ENCODE measurements at regions of chr3 and their contacts with region 1.

Region 1: DNA sequence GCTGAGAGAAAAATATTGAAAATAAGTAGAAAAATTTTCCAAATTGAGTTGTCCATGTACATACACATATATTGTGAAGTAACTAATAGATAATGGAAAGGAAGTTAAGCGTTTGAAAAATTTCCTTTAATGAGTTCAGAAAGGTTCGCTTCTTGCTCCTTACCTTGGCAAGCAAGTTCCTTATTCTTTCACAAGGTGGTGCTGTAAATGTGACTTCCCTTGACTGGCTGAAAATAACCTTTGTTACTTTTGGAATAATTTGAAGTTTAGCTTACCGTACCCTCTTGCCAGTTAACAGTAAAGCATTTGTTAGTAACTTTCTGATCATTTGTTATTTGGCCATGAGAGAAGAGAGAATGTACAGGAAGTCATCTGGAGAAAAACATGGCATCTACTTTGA is 41.6 kb downstream of the PYDC2 start:
- DNase-seq: peak in 1 of 2 experiments; percentile 5
- H3K4me3 ChIP-seq: no peak overlapping the region
- H3K4me3 Mint-ChIP-seq: no peak overlapping the region
- H3K27ac Mint-ChIP-seq: no peak overlapping the region
- H3K4me1 ChIP-seq: no peaks in the 10 kb centered on the region; the same call in 1 of the 2 replicates
- H3K4me1 Mint-ChIP-seq: peaks cover 6% of the 10 kb centered on the region
- H3K27me3 ChIP-seq: no peaks in the 10 kb centered on the region
- H3K27me3 Mint-ChIP-seq: no peaks in the 10 kb centered on the region
- CTCF ChIP-seq: peak; percentile 29 to 40

Region 2: GRCh38 chr3:191528589-191528988 is 26.0 kb after region 1 on chr3:
- CTCF ChIA-PET with region 1: no interaction called
- POLR2A ChIA-PET with region 1: no interaction called
- intact Hi-C with region 1: no loop called
- DNase-seq: no peak
- H3K4me3 ChIP-seq: no peak overlapping the region
- H3K4me3 Mint-ChIP-seq: no peak overlapping the region
- H3K27ac Mint-ChIP-seq: no peak overlapping the region
- H3K4me1 ChIP-seq: no peaks in the 10 kb centered on the region
- H3K4me1 Mint-ChIP-seq: no peaks in the 10 kb centered on the region
- H3K27me3 ChIP-seq: no peaks in the 10 kb centered on the region
- H3K27me3 Mint-ChIP-seq: no peaks in the 10 kb centered on the region
- CTCF ChIP-seq: no peak

Region 3: DNA sequence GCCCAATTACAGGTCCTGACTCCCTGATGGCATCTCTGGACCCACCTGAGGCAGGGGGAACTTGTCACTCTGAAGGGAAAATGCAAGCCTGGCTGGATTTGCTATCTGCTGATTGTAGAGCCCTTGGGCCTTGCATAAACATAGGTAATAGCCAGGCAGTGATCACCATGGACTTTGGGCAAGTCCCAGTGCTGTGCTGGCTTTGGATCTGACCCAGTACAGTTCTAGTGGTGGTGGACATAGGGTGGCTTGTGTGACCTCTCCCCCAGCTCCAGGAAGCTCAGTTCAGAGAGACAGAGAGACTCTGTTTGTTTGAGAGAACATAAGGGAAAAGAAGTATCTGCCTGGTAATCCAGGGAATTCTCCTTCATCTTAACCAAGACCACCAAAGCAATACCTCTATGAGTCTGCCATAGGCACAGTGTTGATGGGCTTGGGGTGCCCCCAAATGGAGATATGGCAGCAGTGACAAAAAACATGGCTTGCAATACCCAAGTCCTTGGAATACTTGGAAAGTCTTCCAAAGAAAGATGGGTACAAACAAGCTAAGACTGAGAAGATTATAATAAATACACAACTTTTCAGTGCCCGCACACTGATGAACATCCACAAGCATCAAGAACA is 306.9 kb after region 1 on chr3:
- CTCF ChIA-PET with region 1: no interaction called
- POLR2A ChIA-PET with region 1: no interaction called
- intact Hi-C with region 1: loop called (anchors 1 kb)
- DNase-seq: peak in 1 of 2 experiments; percentile 29
- H3K4me3 ChIP-seq: no peak overlapping the region
- H3K4me3 Mint-ChIP-seq: no peak overlapping the region
- H3K27ac Mint-ChIP-seq: no peak overlapping the region
- H3K4me1 ChIP-seq: peaks cover 10% of the 10 kb centered on the region; the same call in 1 of the 2 replicates
- H3K4me1 Mint-ChIP-seq: peaks cover 7% of the 10 kb centered on the region
- H3K27me3 ChIP-seq: no peaks in the 10 kb centered on the region
- H3K27me3 Mint-ChIP-seq: no peaks in the 10 kb centered on the region
- CTCF ChIP-seq: peak in 1 of 2 experiments; percentile 10

Region 4: GRCh38 chr3:192106543-192106942 is 604.0 kb after region 1 on chr3:
- CTCF ChIA-PET with region 1: no interaction called
- POLR2A ChIA-PET with region 1: no interaction called
- intact Hi-C with region 1: loop called (anchors 2 kb)
- DNase-seq: no peak
- H3K4me3 ChIP-seq: no peak overlapping the region
- H3K4me3 Mint-ChIP-seq: no peak overlapping the region
- H3K27ac Mint-ChIP-seq: no peak overlapping the region
- H3K4me1 ChIP-seq: no peaks in the 10 kb centered on the region
- H3K4me1 Mint-ChIP-seq: no peaks in the 10 kb centered on the region
- H3K27me3 ChIP-seq: no peaks in the 10 kb centered on the region
- H3K27me3 Mint-ChIP-seq: no peaks in the 10 kb centered on the region
- CTCF ChIP-seq: no peak

Measured in Caco-2 (cell line).